ENCODE measurements at regions of chr17 and their contacts with region 1.

Region 1: DNA sequence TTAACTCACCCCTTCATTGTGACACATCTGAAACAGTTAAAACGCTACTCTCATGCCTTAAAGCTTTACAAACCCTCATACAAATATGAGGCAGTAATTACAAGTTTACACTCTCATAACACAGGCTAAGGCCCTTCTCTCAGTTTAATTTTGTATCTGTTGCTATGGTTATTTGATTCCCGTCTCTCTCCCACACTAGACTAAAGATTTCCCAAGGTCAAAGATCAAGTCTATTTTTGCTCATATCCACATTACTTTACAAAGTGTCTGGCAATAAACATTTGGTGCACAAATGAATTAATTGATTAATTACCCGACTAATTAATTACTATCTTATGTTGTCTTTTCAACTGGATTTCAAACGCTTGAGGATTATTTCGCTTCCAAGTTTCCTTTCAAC is 86.4 kb upstream of the MYOCD start:
- DNase-seq: no peak
- H3K4me3 ChIP-seq: no peak overlapping the region
- H3K4me3 Mint-ChIP-seq: no peak overlapping the region
- H3K27ac ChIP-seq: no peak overlapping the region
- H3K27ac Mint-ChIP-seq: no peak overlapping the region
- H3K4me1 ChIP-seq: no peaks in the 10 kb centered on the region
- H3K4me1 Mint-ChIP-seq: no peaks in the 10 kb centered on the region
- H3K27me3 ChIP-seq: no peaks in the 10 kb centered on the region
- H3K27me3 Mint-ChIP-seq: no peaks in the 10 kb centered on the region
- CTCF ChIP-seq: no peak

Region 2: DNA sequence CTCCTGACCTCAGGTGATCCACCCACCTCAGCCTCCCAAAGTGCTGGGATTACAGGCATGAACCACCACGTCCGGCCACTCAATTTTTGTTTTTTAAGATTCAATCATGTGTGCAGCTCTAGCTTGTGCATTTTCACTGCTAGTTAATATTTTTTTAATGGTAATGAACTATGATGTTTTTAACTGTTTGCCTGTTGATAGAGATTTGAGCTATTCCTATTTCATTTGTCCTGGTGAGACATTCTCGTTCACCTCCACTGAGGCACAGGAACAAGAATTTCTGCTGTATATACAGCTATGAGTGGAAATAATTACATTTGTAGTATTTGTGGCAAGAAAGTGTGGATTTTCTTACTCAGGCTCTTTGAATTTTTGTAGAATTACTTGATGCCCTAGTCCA is 51.3 kb before region 1 on chr17:
- intact Hi-C with region 1: loop called in 1 of 2 experiments (anchors 5 kb)
- DNase-seq: no peak
- H3K4me3 ChIP-seq: no peak overlapping the region
- H3K4me3 Mint-ChIP-seq: no peak overlapping the region
- H3K27ac ChIP-seq: no peak overlapping the region
- H3K27ac Mint-ChIP-seq: no peak overlapping the region
- H3K4me1 ChIP-seq: no peaks in the 10 kb centered on the region
- H3K4me1 Mint-ChIP-seq: no peaks in the 10 kb centered on the region
- H3K27me3 ChIP-seq: no peaks in the 10 kb centered on the region
- H3K27me3 Mint-ChIP-seq: peaks cover 0 to 3% (median 0%) of the 10 kb centered on the region in 3 donors
- CTCF ChIP-seq: no peak